ENCODE measurements at regions of chr10 and their contacts with region 1.

Region 1: GRCh38 chr10:28558923-28559508 is 26.1 kb downstream of the WAC start:
- DNase-seq: no peak
- H3K4me3 ChIP-seq: no peak overlapping the region
- H3K27ac ChIP-seq: no peak overlapping the region
- H3K4me1 ChIP-seq: no peaks in the 10 kb centered on the region
- H3K27me3 ChIP-seq: no peaks in the 10 kb centered on the region
- CTCF ChIP-seq: no peak

Region 2: GRCh38 chr10:28503114-28503513 is 55.9 kb before region 1 on chr10:
- CTCF ChIA-PET with region 1: no interaction called
- dilution Hi-C with region 1: loop called (anchors 5 kb)
- in situ Hi-C with region 1: no loop called
- intact Hi-C with region 1: no loop called
- DNase-seq: peak; percentile 15
- H3K4me3 ChIP-seq: no peak overlapping the region
- H3K27ac ChIP-seq: no peak overlapping the region
- H3K4me1 ChIP-seq: no peaks in the 10 kb centered on the region
- H3K27me3 ChIP-seq: no peaks in the 10 kb centered on the region
- CTCF ChIP-seq: peak; percentile 3 to 34

Measured in mammary epithelial cell (primary cell).